ENCODE measurements at regions of chr1 and their contacts with region 1.

Region 1: GRCh38 chr1:244864253-244865027 is at the start of gene HNRNPU:
- DNase-seq: peak; percentile 92 to 98 (median 97)
- H3K4me3 ChIP-seq: peak within 1 kb of the TSS; percentile 73 to 100 (median 97)
- H3K27ac ChIP-seq: peak within 1 kb of the TSS; percentile 92 to 100 (median 100)
- H3K27me3 ChIP-seq: no peaks in the 10 kb centered on the region
- CTCF ChIP-seq: peak in 45 of 56 donors; percentile 11 to 58 (median 34)
- total RNA-seq, gene HNRNPU: 196 to 344 (median 257) TPM

Region 2: DNA sequence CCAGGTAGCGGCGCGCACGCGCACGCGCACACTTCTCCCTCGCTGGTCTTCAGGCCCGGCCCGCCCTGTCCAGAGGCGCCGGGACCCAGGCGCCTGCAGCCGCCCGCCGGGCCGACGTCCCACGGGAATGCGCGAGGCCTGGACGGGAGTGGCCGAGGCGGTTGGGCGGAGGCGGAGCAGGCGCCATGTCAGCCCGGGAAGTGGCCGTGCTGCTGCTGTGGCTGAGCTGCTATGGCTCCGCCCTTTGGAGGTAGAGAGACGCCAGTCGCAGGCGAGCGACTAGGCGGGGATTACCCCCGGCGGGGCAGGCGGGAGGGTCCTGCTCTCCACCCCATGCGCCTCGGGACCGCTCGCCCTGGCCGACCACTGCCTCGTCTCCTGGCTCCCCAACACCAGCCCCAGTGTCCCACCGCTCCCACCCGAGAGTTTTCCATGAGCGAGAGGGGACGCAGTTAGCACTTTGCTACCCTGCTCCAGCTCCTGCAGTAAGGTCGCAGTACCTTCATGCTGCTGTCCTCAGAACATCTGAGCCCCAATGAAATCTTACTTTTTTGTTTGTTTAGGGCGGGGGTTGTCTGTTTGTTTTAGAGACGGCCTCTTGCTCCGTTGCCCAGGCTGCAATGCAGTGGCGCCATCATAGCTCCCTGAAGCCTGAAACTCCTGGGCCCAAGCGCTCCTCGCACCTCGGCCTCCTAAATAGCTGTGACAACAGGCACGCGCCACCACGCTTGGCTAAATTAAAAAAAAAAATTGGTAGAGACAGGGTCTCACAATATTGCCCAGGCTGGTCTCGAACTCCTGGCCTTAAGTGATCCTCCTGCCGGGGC is 403.0 kb before region 1 on chr1 and contains the start of gene CATSPERE:
- intact Hi-C with region 1: no loop called
- DNase-seq: peak; percentile 57 to 87 (median 72)
- H3K4me3 ChIP-seq: peak within 1 kb of the TSS; percentile 51 to 89 (median 73)
- H3K27ac ChIP-seq: peak within 1 kb of the TSS; percentile 52 to 95 (median 87)
- H3K27me3 ChIP-seq: no peaks in the 10 kb centered on the region
- CTCF ChIP-seq: peak in 23 of 56 donors; percentile 5 to 37 (median 20)
- total RNA-seq, gene CATSPERE: 1.5 to 7.7 (median 4.0) TPM

Region 3: DNA sequence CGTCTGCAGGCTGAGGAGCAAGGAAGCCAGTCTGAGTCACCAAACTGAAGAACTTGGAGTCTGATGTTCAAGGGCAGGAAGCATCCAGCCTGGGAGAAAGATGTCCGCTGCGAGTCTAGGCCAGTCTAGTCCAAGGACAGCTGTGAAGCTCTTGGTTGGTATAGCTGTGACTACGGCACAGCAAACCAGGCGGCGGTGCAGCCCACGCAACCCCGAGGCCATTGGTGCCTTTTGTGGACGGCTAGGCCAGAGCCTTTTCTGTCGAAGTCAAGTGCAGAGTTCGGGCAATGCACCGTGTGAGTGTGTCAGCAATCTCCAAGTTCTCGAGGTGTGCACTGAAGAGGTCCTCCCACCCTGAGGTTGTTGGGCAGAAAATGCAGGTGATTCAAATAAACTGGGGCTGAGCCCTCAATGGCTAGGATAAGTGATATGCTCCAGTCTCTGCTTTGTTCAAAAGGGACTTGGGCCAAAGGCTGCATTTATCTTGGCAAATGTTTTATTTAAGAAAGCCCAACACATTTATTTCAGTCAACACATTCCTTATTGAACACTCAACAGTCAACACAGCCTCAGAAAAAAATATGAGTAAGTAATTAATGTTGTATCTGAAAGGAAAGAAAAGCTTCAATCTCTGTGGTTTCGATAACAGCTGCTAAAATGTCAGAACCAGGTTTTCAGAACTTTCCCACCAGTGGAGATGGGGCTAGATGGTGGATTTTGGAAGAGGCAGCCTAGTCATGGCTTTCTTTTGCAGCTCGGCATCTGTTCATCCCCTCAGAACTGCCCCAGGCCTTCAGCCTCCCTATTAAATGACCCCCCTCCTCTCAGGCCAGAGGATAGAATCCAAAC is 107.1 kb before region 1 on chr1:
- intact Hi-C with region 1: no loop called
- DNase-seq: no peak
- H3K4me3 ChIP-seq: no peak overlapping the region
- H3K27ac ChIP-seq: no peak overlapping the region
- H3K27me3 ChIP-seq: no peaks in the 10 kb centered on the region
- CTCF ChIP-seq: no peak

Region 4: GRCh38 chr1:244835276-244836134 is 28.9 kb before region 1 on chr1 and contains the start of gene COX20:
- intact Hi-C with region 1: loop called (anchors 1 kb)
- DNase-seq: peak; percentile 70 to 88 (median 82)
- H3K4me3 ChIP-seq: peak within 1 kb of the TSS; percentile 50 to 90 (median 78)
- H3K27ac ChIP-seq: peak within 1 kb of the TSS; percentile 96 to 100 (median 100)
- H3K27me3 ChIP-seq: no peaks in the 10 kb centered on the region
- CTCF ChIP-seq: peak in 18 of 56 donors; percentile 4 to 38 (median 15)
- total RNA-seq, gene COX20: 23.7 to 50.5 (median 37.6) TPM

Region 5: GRCh38 chr1:244918421-244919319 is 54.2 kb after region 1 on chr1:
- intact Hi-C with region 1: loop called (anchors 2 to 5 kb)
- DNase-seq: peak in 9 of 10 donors; percentile 29 to 73 (median 48)
- H3K4me3 ChIP-seq: peak overlapping the region; percentile 38 to 77 (median 67)
- H3K27ac ChIP-seq: peak overlapping the region in 57 of 59 donors; percentile 17 to 87 (median 71)
- H3K27me3 ChIP-seq: no peaks in the 10 kb centered on the region
- CTCF ChIP-seq: peak in 22 of 56 donors; percentile 4 to 51 (median 28)

Region 6: DNA sequence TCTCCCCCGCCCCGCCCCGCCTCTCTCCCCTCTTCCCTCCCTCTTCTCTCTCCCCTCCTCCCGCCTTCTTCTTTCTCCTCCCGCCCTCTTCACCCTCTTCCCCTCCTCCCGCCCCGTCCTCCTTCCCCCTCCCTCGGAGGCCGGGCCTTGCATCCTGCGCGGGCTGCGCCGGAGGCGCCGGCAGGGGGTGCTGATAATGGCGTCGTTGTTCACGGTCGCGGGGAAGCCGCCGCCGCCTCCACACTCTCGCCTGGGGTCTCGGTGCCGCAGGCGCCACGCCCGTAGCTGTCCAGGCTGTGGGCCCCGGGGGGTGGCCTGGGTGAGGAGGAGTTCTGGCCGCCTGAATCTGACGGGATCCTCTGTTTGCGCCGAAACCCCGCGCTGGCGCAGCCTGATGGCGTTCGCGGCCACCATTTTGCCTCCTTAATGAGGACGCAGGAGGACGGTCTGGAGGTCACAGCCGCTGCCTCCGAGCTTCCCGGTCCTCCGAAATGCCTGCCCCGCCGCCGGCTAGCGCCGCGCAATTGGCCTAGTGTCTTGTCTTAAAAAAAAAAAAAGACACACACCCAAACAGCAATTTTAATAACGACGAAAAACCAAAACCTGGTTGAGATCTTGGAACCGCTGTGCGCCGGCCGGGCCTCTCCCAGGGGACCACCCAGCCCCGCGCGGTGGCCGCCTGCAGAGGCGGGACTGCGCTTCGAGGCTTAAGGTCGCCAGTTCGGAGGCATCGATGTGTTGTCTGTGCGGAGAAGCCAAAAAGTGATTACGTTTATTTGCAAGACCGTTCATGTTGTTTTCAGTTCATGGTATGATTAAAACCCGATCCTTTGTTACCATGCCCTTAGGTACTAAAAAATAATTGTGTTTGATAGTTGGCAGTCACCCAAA is 106.5 kb after region 1 on chr1:
- intact Hi-C with region 1: loop called (anchors 1 kb)
- DNase-seq: peak; percentile 87 to 95 (median 93)
- H3K4me3 ChIP-seq: peak overlapping the region; percentile 56 to 89 (median 79)
- H3K27ac ChIP-seq: peak overlapping the region; percentile 96 to 100 (median 100)
- H3K27me3 ChIP-seq: no peaks in the 10 kb centered on the region
- CTCF ChIP-seq: peak in 55 of 56 donors; percentile 27 to 77 (median 56)

Region 7: GRCh38 chr1:245045087-245045881 is 180.8 kb after region 1 on chr1:
- intact Hi-C with region 1: loop called (anchors 5 kb)
- DNase-seq: peak in 1 of 10 donors; percentile 42
- H3K4me3 ChIP-seq: peak overlapping the region in 50 of 59 donors; percentile 1 to 54 (median 30)
- H3K27ac ChIP-seq: peak overlapping the region in 32 of 59 donors; percentile 9 to 88 (median 53)
- H3K27me3 ChIP-seq: no peaks in the 10 kb centered on the region
- CTCF ChIP-seq: no peak